ENCODE measurements at regions of chr6 and their contacts with region 1.

Region 1: DNA sequence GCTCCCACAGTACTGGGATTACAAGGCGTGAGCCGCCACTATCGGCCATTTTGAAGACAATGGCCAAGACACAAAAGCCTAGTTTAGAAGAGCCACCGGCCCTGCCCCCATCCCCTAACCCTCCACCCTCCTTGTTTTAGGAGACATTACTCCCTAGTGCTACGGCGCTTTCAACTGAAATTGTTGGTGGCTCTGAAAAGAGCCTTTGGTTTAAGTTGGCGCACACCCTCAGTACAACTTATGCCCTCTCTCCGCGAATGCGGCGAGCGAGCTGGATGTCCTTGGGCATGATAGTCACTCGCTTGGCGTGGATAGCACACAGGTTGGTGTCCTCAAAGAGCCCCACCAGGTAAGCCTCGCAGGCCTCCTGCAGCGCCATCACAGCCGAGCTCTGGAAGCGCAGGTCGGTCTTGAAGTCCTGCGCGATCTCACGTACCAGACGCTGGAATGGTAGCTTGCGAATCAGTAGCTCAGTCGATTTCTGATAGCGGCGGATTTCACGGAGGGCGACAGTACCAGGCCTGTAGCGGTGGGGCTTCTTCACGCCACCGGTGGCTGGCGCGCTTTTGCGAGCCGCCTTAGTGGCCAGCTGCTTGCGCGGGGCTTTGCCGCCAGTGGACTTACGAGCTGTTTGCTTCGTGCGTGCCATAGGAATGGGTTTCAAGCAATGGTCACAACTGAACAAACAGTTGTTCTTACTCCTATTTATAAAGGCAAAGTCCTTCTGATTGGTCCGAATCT is 114.9 kb upstream of the BTN3A2 start:
- DNase-seq: peak; percentile 58 to 87 (median 79)
- ATAC-seq: peak; percentile 71 to 76 (median 76)
- H3K4me3 ChIP-seq: peak overlapping the region; percentile 74 to 97
- H3K4me3 Mint-ChIP-seq: peak overlapping the region; percentile 93 to 98 (median 93)
- H3K27ac ChIP-seq: peak overlapping the region; percentile 83
- H3K27ac Mint-ChIP-seq: peak overlapping the region; percentile 88 to 93
- H3K4me1 ChIP-seq: peaks cover 12 to 24% of the 10 kb centered on the region in 2 experiments
- H3K4me1 Mint-ChIP-seq: peaks cover 29 to 47% (median 42%) of the 10 kb centered on the region in 3 donors
- H3K27me3 ChIP-seq: no peaks in the 10 kb centered on the region
- H3K27me3 Mint-ChIP-seq: no peaks in the 10 kb centered on the region

Region 2: DNA sequence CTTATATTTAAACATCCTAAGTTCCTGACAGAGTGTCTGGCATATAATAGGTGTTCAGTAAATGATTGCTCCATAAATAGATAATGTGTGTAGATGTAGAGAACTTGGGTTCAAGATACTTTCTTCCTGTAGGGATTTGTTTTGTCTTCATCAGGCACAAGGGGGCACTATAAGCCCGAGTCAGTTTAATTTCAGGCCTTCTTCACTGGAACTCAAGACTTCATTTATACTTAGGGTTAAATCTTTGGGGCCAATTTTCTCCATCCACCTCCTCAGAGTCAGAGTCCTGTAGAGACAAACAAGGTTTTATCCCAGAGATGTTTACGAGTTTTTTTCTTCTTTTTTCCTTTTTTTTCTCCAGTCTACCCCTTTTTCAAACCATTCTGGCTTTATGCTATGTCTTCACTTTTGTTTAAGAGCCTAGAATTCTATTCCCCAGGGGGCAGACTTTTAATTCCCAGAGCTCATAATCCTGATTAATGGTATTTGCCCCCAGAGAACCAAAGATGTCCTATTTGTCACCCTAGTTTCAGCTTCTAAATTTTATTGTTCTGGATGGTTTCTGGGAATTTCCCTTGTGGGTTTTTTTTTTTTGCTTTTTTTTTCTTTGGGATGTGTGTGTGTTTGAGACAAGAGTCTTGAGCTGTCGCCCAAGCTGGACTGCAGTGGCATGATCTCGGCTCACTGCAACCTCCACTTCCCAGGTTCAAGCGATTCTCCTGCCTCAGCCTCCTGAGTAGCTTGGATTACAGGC is 74.5 kb before region 1 on chr6:
- CTCF ChIA-PET with region 1: interaction called in 1 of 2 experiments, 11 read pairs
- POLR2A ChIA-PET with region 1: interaction called in 1 of 2 experiments, 3 read pairs
- DNase-seq: peak in 24 of 35 experiments; percentile 30 to 85 (median 50)
- ATAC-seq: no peak
- H3K4me3 ChIP-seq: no peak overlapping the region
- H3K4me3 Mint-ChIP-seq: peak overlapping the region in 1 of 3 donors; percentile 5
- H3K27ac ChIP-seq: peak overlapping the region; percentile 37
- H3K27ac Mint-ChIP-seq: peak overlapping the region; percentile 58 to 73
- H3K4me1 ChIP-seq: peaks cover 11 to 15% of the 10 kb centered on the region in 2 experiments
- H3K4me1 Mint-ChIP-seq: peaks cover 36 to 39% (median 37%) of the 10 kb centered on the region in 3 donors
- H3K27me3 ChIP-seq: no peaks in the 10 kb centered on the region
- H3K27me3 Mint-ChIP-seq: no peaks in the 10 kb centered on the region

Region 3: DNA sequence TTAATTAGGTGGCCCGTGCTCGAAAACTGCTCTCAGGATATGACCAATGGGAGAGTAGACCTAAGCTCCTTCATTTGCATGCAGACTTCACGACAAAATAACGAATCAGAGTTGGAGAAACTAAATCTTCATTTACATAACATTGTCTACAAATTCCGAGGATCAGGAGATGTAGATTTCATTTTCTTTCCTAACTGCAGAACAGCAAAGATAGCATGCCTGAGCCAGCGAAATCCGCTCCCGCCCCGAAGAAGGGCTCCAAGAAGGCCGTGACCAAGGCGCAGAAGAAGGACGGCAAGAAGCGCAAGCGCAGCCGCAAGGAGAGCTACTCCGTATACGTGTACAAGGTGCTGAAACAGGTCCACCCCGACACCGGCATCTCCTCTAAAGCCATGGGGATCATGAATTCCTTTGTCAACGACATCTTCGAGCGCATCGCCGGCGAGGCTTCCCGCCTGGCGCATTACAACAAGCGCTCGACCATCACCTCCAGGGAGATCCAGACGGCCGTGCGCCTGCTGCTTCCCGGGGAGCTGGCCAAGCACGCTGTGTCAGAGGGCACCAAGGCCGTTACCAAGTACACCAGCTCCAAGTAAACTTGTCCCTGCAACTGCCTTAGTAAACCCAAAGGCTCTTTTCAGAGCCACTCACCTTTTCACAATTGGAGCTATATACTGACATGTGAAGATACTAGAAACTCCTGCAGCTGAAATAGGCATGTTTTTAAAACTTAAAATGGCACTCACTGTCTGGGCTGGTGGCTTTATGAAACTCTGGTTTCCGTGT is 66.4 kb before region 1 on chr6:
- CTCF ChIA-PET with region 1: interaction called in 1 of 2 experiments, 13 read pairs
- POLR2A ChIA-PET with region 1: interaction called in 1 of 2 experiments, 16 read pairs
- DNase-seq: peak in 25 of 35 experiments; percentile 20 to 85 (median 42)
- ATAC-seq: peak; percentile 87 to 91 (median 89)
- H3K4me3 ChIP-seq: peak overlapping the region; percentile 57 to 83
- H3K4me3 Mint-ChIP-seq: peak overlapping the region; percentile 88 to 96 (median 93)
- H3K27ac ChIP-seq: peak overlapping the region; percentile 76
- H3K27ac Mint-ChIP-seq: peak overlapping the region; percentile 94 to 98
- H3K4me1 ChIP-seq: peaks cover 12 to 30% of the 10 kb centered on the region in 2 experiments
- H3K4me1 Mint-ChIP-seq: peaks cover 42 to 48% (median 46%) of the 10 kb centered on the region in 3 donors
- H3K27me3 ChIP-seq: no peaks in the 10 kb centered on the region
- H3K27me3 Mint-ChIP-seq: no peaks in the 10 kb centered on the region

Region 4: DNA sequence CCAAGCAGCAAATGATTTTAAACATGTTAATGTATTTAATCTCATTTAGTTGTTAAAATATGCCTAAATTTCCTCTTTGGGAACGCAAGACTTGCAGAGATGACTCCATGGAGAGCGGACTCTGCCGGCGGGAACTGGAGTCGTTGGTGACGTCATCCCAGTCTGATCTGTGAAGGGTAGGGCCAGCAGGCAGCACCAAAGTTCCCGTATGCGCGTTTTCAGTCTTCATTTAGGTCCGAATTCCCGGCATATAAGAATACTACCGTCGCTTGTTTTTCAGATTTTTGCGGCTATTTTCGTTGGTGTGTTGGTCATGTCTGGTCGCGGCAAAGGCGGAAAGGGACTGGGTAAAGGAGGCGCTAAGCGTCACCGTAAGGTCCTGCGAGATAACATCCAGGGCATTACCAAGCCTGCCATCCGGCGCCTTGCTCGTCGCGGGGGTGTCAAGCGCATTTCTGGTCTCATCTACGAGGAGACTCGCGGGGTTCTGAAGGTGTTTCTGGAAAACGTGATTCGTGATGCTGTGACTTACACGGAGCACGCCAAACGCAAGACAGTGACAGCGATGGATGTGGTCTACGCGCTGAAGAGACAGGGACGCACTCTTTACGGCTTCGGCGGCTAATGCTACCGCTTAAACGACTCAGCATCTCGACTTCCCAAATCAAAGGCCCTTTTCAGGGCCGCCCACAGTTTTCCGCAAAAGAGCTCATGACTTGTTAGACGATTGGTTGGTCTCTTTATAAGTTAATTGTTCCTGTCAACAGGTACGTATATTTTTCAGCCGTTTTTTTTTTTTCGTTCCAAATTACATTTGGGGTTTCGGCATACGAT is 45.6 kb before region 1 on chr6:
- CTCF ChIA-PET with region 1: interaction called in 1 of 2 experiments, 36 read pairs
- POLR2A ChIA-PET with region 1: interaction called, 39 to 115 read pairs
- DNase-seq: peak; percentile 73 to 96 (median 82)
- ATAC-seq: peak; percentile 63 to 70 (median 68)
- H3K4me3 ChIP-seq: peak overlapping the region; percentile 73 to 98
- H3K4me3 Mint-ChIP-seq: no peak overlapping the region
- H3K27ac ChIP-seq: peak overlapping the region; percentile 93
- H3K27ac Mint-ChIP-seq: no peak overlapping the region
- H3K4me1 ChIP-seq: peaks cover 23 to 37% of the 10 kb centered on the region in 2 experiments
- H3K4me1 Mint-ChIP-seq: peaks cover 17 to 28% (median 24%) of the 10 kb centered on the region in 3 donors
- H3K27me3 ChIP-seq: no peaks in the 10 kb centered on the region
- H3K27me3 Mint-ChIP-seq: no peaks in the 10 kb centered on the region

Region 5: DNA sequence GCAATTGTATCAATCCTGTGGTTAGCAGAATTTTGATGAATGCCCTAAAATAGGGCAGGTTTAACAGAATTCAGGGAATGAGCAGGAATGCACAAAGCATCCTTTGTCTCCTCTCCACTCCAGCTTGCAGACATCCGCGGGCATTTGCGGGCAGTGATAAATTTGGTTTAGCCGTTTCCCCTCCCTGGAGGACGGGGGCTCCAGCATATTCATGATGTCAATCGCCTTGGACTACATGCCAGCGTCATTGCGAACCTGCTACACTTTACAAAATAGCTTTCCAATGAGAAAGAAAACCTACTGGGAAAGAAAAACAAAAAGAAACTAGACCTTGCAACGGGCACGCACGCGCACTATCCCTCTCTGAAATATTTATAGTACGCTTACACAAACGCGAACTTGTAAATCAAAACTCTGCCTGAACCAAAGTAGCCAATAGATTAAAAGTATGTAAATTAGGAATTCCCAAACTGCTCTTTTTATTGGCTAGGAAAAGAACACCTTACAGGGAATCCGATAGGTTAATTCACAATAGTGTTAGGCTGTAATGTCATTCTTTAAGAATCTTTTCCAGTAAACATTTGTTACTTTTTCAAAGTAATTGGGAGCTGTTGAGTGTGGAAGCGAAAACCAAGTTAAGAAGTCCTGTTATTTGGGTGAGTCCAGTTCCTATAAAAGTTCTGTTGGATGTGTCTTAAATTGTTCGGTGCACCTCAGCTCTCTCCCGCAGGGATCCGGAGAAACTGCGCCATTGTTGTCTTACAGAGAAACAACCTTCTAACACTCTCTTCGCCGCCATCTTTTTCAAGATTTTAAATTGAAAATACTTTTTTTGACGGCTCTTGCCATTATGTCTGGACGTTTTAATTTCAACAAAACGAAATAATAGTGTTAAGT is 26.2 kb before region 1 on chr6:
- CTCF ChIA-PET with region 1: interaction called in 1 of 2 experiments, 17 read pairs
- POLR2A ChIA-PET with region 1: interaction called in 1 of 2 experiments, 6 read pairs
- DNase-seq: peak in 34 of 35 experiments; percentile 36 to 84 (median 58)
- ATAC-seq: peak; percentile 87 to 90 (median 89)
- H3K4me3 ChIP-seq: peak overlapping the region; percentile 58 to 92
- H3K4me3 Mint-ChIP-seq: no peak overlapping the region
- H3K27ac ChIP-seq: peak overlapping the region; percentile 95
- H3K27ac Mint-ChIP-seq: no peak overlapping the region
- H3K4me1 ChIP-seq: peaks cover 10 to 13% of the 10 kb centered on the region in 2 experiments
- H3K4me1 Mint-ChIP-seq: peaks cover 5 to 14% (median 14%) of the 10 kb centered on the region in 3 donors
- H3K27me3 ChIP-seq: no peaks in the 10 kb centered on the region
- H3K27me3 Mint-ChIP-seq: no peaks in the 10 kb centered on the region

Region 6: GRCh38 chr6:26234421-26235296 is 15.5 kb before region 1 on chr6:
- CTCF ChIA-PET with region 1: interaction called in 1 of 2 experiments, 46 read pairs
- POLR2A ChIA-PET with region 1: interaction called, 12 to 78 read pairs
- DNase-seq: peak; percentile 52 to 83 (median 66)
- ATAC-seq: peak; percentile 66 to 78 (median 76)
- H3K4me3 ChIP-seq: peak overlapping the region; percentile 88 to 98
- H3K4me3 Mint-ChIP-seq: peak overlapping the region; percentile 87 to 96 (median 88)
- H3K27ac ChIP-seq: peak overlapping the region; percentile 95
- H3K27ac Mint-ChIP-seq: peak overlapping the region; percentile 96 to 100
- H3K4me1 ChIP-seq: peaks cover 13 to 19% of the 10 kb centered on the region in 2 experiments
- H3K4me1 Mint-ChIP-seq: peaks cover 32 to 39% (median 36%) of the 10 kb centered on the region in 3 donors
- H3K27me3 ChIP-seq: no peaks in the 10 kb centered on the region
- H3K27me3 Mint-ChIP-seq: no peaks in the 10 kb centered on the region

Region 7: GRCh38 chr6:26454631-26455030 is 204.5 kb after region 1 on chr6:
- CTCF ChIA-PET with region 1: no interaction called
- POLR2A ChIA-PET with region 1: no interaction called
- DNase-seq: no peak
- ATAC-seq: no peak
- H3K4me3 ChIP-seq: no peak overlapping the region
- H3K4me3 Mint-ChIP-seq: no peak overlapping the region
- H3K27ac ChIP-seq: no peak overlapping the region
- H3K27ac Mint-ChIP-seq: peak overlapping the region in 1 of 2 donors; percentile 30
- H3K4me1 ChIP-seq: peaks cover 5 to 14% of the 10 kb centered on the region in 2 experiments
- H3K4me1 Mint-ChIP-seq: peaks cover 34 to 57% (median 37%) of the 10 kb centered on the region in 3 donors
- H3K27me3 ChIP-seq: no peaks in the 10 kb centered on the region
- H3K27me3 Mint-ChIP-seq: no peaks in the 10 kb centered on the region

Measured in T-cell (primary cell).